ENCODE measurements at regions of chr7 and their contacts with region 1.

Region 1: DNA sequence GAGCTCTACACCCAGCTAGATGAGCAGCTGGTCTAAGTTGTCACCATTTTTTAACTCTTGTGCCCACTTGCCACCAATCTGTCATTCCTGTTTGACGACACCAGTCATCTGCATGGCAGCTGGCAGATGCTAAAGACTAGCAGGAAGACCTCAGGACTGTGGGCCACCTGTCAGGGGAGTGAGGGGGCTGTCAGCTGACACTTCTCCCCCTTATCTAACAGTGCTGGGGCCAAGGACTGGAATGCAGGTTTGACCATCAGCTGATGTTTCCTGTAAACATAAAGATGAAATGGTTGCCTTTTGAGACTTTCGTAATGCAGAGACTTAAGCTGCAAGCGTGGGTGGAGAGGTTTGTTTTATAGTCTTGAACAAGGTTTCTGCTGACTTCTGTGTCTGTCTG is 93.5 kb downstream of the WNT2 start:
- DNase-seq: no peak
- ATAC-seq: no peak
- H3K4me3 ChIP-seq: no peak overlapping the region
- H3K27ac ChIP-seq: no peak overlapping the region
- H3K4me1 ChIP-seq: no peaks in the 10 kb centered on the region
- H3K27me3 ChIP-seq: no peaks in the 10 kb centered on the region

Region 2: DNA sequence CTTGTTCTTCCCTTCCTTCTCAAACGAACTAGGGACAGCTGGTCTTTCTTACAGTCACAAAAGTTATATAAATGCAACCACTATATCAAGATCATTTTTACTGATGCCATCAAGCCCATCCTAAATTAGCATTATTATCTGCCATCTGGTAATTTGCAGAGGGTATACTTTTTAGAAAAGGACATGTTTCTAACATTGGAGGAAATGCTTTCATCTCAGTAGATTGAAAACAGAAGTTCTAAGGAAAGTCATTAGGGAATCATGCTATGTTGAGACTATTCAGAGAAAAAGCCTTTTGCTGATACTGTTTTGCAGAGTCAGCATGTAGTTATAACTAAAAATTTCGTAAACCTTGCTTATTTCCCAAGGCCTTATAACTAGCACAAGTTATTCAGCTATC is 53.1 kb before region 1 on chr7:
- intact Hi-C with region 1: loop called in 1 of 2 experiments (anchors 5 kb)
- DNase-seq: no peak
- ATAC-seq: no peak
- H3K4me3 ChIP-seq: no peak overlapping the region
- H3K27ac ChIP-seq: no peak overlapping the region
- H3K4me1 ChIP-seq: no peaks in the 10 kb centered on the region
- H3K27me3 ChIP-seq: no peaks in the 10 kb centered on the region